ENCODE measurements at regions of chr15 and their contacts with region 1.

Region 1: GRCh38 chr15:60548101-60548500 is 69.2 kb upstream of the ICE2 start:
- DNase-seq: peak in 5 of 35 experiments; percentile 21 to 63 (median 29)
- ATAC-seq: peak; percentile 61 to 79 (median 74)
- H3K4me3 ChIP-seq: peak overlapping the region in 1 of 2 donors; percentile 7
- H3K4me3 Mint-ChIP-seq: peak overlapping the region; percentile 57 to 66 (median 65)
- H3K27ac ChIP-seq: peak overlapping the region; percentile 85
- H3K27ac Mint-ChIP-seq: peak overlapping the region; percentile 94 to 95
- H3K4me1 ChIP-seq: peaks cover 49 to 70% of the 10 kb centered on the region in 2 experiments
- H3K4me1 Mint-ChIP-seq: peaks cover 97 to 98% (median 97%) of the 10 kb centered on the region in 3 donors
- H3K27me3 ChIP-seq: no peaks in the 10 kb centered on the region
- H3K27me3 Mint-ChIP-seq: no peaks in the 10 kb centered on the region

Region 2: GRCh38 chr15:59825913-59826312 is 722.2 kb before region 1 on chr15:
- CTCF ChIA-PET with region 1: no interaction called
- POLR2A ChIA-PET with region 1: no interaction called
- DNase-seq: no peak
- ATAC-seq: no peak
- H3K4me3 ChIP-seq: no peak overlapping the region
- H3K4me3 Mint-ChIP-seq: no peak overlapping the region
- H3K27ac ChIP-seq: no peak overlapping the region
- H3K27ac Mint-ChIP-seq: no peak overlapping the region
- H3K4me1 ChIP-seq: no peaks in the 10 kb centered on the region
- H3K4me1 Mint-ChIP-seq: no peaks in the 10 kb centered on the region
- H3K27me3 ChIP-seq: no peaks in the 10 kb centered on the region
- H3K27me3 Mint-ChIP-seq: peaks cover 0 to 3% of the 10 kb centered on the region in 2 donors

Region 3: GRCh38 chr15:60478566-60479360 is 69.3 kb before region 1 on chr15 and contains the start of gene ICE2:
- CTCF ChIA-PET with region 1: no interaction called
- POLR2A ChIA-PET with region 1: interaction called in 1 of 2 experiments, 15 read pairs
- DNase-seq: peak; percentile 90 to 97 (median 95)
- ATAC-seq: peak; percentile 93 to 95 (median 94)
- H3K4me3 ChIP-seq: peak within 1 kb of the TSS; percentile 80 to 95
- H3K4me3 Mint-ChIP-seq: peak within 1 kb of the TSS; percentile 87 to 97 (median 93)
- H3K27ac ChIP-seq: peak within 1 kb of the TSS; percentile 91
- H3K27ac Mint-ChIP-seq: peak within 1 kb of the TSS; percentile 98
- H3K4me1 ChIP-seq: peaks cover 13 to 26% of the 10 kb centered on the region in 2 experiments
- H3K4me1 Mint-ChIP-seq: peaks cover 53 to 70% (median 64%) of the 10 kb centered on the region in 3 donors
- H3K27me3 ChIP-seq: no peaks in the 10 kb centered on the region
- H3K27me3 Mint-ChIP-seq: no peaks in the 10 kb centered on the region
- total RNA-seq, gene ICE2: 47.4 to 68.7 (median 52.4) TPM

Region 4: DNA sequence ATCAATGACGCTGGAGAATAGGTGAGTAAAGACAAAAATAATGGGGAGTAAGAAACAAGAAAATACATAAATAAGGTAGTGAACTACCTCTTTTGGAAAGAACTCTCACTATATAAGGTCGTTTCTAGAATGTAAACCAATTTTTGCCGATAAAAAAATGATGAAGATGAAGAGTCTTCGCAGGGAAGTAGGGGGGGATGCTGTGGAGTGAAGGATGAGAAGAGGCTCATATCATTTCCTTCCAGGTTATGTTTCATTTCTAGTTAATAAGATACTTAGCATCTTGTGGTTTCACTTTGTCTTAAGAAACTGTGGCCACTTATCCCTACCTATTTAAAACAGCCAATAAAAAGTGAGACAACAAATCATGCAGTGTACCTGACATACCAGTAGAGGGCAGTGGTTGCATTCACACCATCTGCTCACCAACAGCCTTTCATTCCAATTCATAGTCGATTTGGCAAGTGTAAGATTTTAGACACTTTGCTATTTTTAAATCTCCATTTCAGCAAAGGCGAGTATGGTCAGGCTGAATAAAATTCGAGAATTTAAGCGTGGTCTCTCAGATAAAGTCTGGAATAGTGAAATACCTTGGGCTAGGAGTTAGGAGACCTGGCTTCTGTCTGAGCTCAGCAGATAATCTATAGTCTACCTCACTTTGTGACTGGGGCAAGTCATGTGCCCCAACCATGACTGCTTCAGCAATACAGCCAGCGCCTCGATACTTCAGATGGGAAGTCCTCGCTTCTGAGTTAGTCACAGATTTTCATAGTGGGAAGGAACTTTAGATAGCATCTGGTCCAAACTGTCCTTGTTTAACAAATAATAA is 40.3 kb before region 1 on chr15:
- CTCF ChIA-PET with region 1: interaction called in 1 of 2 experiments, 10 read pairs
- POLR2A ChIA-PET with region 1: no interaction called
- DNase-seq: peak in 31 of 35 experiments; percentile 8 to 88 (median 41)
- ATAC-seq: peak; percentile 74 to 82 (median 76)
- H3K4me3 ChIP-seq: no peak overlapping the region
- H3K4me3 Mint-ChIP-seq: peak overlapping the region in 1 of 3 donors; percentile 37
- H3K27ac ChIP-seq: peak overlapping the region; percentile 53
- H3K27ac Mint-ChIP-seq: peak overlapping the region; percentile 78 to 84
- H3K4me1 ChIP-seq: peaks cover 0 to 20% of the 10 kb centered on the region in 2 experiments
- H3K4me1 Mint-ChIP-seq: peaks cover 53 to 59% (median 59%) of the 10 kb centered on the region in 3 donors
- H3K27me3 ChIP-seq: no peaks in the 10 kb centered on the region
- H3K27me3 Mint-ChIP-seq: no peaks in the 10 kb centered on the region

Region 5: GRCh38 chr15:60526127-60526625 is 21.9 kb before region 1 on chr15:
- CTCF ChIA-PET with region 1: interaction called, 5 to 27 read pairs
- POLR2A ChIA-PET with region 1: interaction called in 1 of 2 experiments, 8 read pairs
- DNase-seq: peak in 19 of 35 experiments; percentile 27 to 66 (median 42)
- ATAC-seq: peak in 2 of 4 experiments; percentile 25 to 30
- H3K4me3 ChIP-seq: no peak overlapping the region
- H3K4me3 Mint-ChIP-seq: no peak overlapping the region
- H3K27ac ChIP-seq: peak overlapping the region; percentile 82
- H3K27ac Mint-ChIP-seq: peak overlapping the region; percentile 94 to 96
- H3K4me1 ChIP-seq: peaks cover 3 to 27% of the 10 kb centered on the region in 2 experiments
- H3K4me1 Mint-ChIP-seq: peaks cover 65 to 90% (median 84%) of the 10 kb centered on the region in 3 donors
- H3K27me3 ChIP-seq: no peaks in the 10 kb centered on the region
- H3K27me3 Mint-ChIP-seq: no peaks in the 10 kb centered on the region

Region 6: GRCh38 chr15:60573936-60574335 is 25.8 kb after region 1 on chr15:
- CTCF ChIA-PET with region 1: interaction called, 3 to 9 read pairs
- POLR2A ChIA-PET with region 1: interaction called, 4 to 23 read pairs
- DNase-seq: peak in 30 of 35 experiments; percentile 37 to 76 (median 53)
- ATAC-seq: peak; percentile 46 to 85 (median 61)
- H3K4me3 ChIP-seq: peak overlapping the region in 1 of 2 donors; percentile 12
- H3K4me3 Mint-ChIP-seq: peak overlapping the region; percentile 69 to 74 (median 73)
- H3K27ac ChIP-seq: peak overlapping the region; percentile 80
- H3K27ac Mint-ChIP-seq: peak overlapping the region; percentile 95 to 96
- H3K4me1 ChIP-seq: peaks cover 56 to 73% of the 10 kb centered on the region in 2 experiments
- H3K4me1 Mint-ChIP-seq: peaks cover 86 to 96% (median 92%) of the 10 kb centered on the region in 3 donors
- H3K27me3 ChIP-seq: no peaks in the 10 kb centered on the region
- H3K27me3 Mint-ChIP-seq: no peaks in the 10 kb centered on the region

Region 7: DNA sequence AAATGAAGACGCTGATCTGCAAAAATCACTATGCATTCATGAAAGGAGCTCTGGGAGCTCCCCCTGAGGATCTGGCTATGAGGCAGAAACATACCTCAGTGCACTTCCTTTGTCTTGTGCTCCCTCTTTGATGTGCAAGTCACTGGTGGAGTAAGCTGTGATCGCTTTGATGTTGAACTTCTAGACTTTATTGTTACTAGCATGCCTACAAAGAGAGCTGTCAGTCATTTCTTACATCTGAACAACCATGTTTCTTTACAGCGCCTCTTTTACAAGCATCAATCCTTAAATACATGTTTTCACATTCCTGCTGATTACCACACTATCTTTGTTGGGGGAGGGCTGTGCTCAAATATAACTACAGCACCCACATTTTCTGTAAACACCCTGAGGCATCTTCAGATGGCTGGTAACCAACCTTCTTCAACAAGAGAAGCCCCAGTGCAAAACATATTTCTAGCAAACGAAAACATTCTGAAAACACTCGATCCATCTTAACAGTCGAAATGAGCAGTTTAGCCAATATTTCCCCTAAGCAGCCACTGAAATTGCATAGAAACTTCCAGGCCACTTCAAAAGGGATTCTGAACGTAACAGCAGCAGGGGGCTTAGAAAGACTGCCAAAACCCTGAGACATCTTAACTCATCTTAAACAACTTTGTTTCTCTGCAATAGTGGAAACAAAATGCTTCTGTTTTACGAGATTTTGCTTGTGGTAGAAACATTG is 32.7 kb after region 1 on chr15:
- CTCF ChIA-PET with region 1: interaction called in 1 of 2 experiments, 18 read pairs
- POLR2A ChIA-PET with region 1: interaction called, 5 to 23 read pairs
- DNase-seq: peak in 28 of 35 experiments; percentile 32 to 88 (median 58)
- ATAC-seq: peak; percentile 83 to 92 (median 88)
- H3K4me3 ChIP-seq: peak overlapping the region; percentile 12 to 25
- H3K4me3 Mint-ChIP-seq: peak overlapping the region; percentile 68 to 70 (median 70)
- H3K27ac ChIP-seq: peak overlapping the region; percentile 87
- H3K27ac Mint-ChIP-seq: peak overlapping the region; percentile 96 to 97
- H3K4me1 ChIP-seq: peaks cover 50 to 66% of the 10 kb centered on the region in 2 experiments
- H3K4me1 Mint-ChIP-seq: peaks cover 84 to 95% (median 93%) of the 10 kb centered on the region in 3 donors
- H3K27me3 ChIP-seq: no peaks in the 10 kb centered on the region
- H3K27me3 Mint-ChIP-seq: no peaks in the 10 kb centered on the region

Measured in T-cell (primary cell).